Prostate gland (tissue), 2 donors: ENCODE measurements at regions of chr5 and their contacts with region 1.

Region 1: GRCh38 chr5:77645158-77645994 is 6.9 kb upstream of the OTP start:
- DNase-seq: no peak
- H3K4me3 ChIP-seq: peak overlapping the region in 1 of 2 donors; percentile 9
- H3K27ac ChIP-seq: no peak overlapping the region
- H3K4me1 ChIP-seq: no peaks in the 10 kb centered on the region
- H3K27me3 ChIP-seq: peaks cover 45% of the 10 kb centered on the region
- CTCF ChIP-seq: peak in 3 of 4 experiments; percentile 26 to 55 (median 33)
- POLR2A ChIP-seq: no peak

Region 2: GRCh38 chr5:77775790-77776553 is 130.6 kb after region 1 on chr5 and contains the start of gene TBCA:
- intact Hi-C with region 1: loop called (anchors 10 kb)
- DNase-seq: peak; percentile 79
- H3K4me3 ChIP-seq: peak within 1 kb of the TSS; percentile 63 to 86
- H3K27ac ChIP-seq: peak within 1 kb of the TSS; percentile 91 to 97
- H3K4me1 ChIP-seq: peaks cover 11% of the 10 kb centered on the region
- H3K27me3 ChIP-seq: no peaks in the 10 kb centered on the region
- CTCF ChIP-seq: peak in 2 of 4 experiments; percentile 29 to 35
- POLR2A ChIP-seq: peak; percentile 91
- total RNA-seq, gene TBCA: 120 to 180 TPM